WTC11 (cell line): ENCODE measurements at regions of chr6 and their contacts with region 1.

Region 1: GRCh38 chr6:104896914-104897313 is 37.2 kb upstream of the HACE1 start:
- DNase-seq: no peak
- ATAC-seq: no peak
- H3K4me3 Mint-ChIP-seq: no peak overlapping the region
- H3K27ac Mint-ChIP-seq: no peak overlapping the region
- H3K4me1 Mint-ChIP-seq: peaks cover 8% of the 10 kb centered on the region
- H3K27me3 Mint-ChIP-seq: no peaks in the 10 kb centered on the region
- CTCF ChIP-seq: no peak; the same call in 1 of the 2 replicates

Region 2: GRCh38 chr6:104653781-104654180 is 243.1 kb before region 1 on chr6:
- CTCF ChIA-PET with region 1: no interaction called
- POLR2A ChIA-PET with region 1: interaction called, 11 read pairs
- DNase-seq: no peak
- ATAC-seq: no peak
- H3K4me3 Mint-ChIP-seq: no peak overlapping the region
- H3K27ac Mint-ChIP-seq: no peak overlapping the region
- H3K4me1 Mint-ChIP-seq: peaks cover 3% of the 10 kb centered on the region; the same call in 1 of the 2 replicates
- H3K27me3 Mint-ChIP-seq: no peaks in the 10 kb centered on the region
- CTCF ChIP-seq: no peak